Dorsolateral prefrontal cortex (tissue), 120 donors: ENCODE measurements at regions of chr4 and their contacts with region 1.

Region 1: DNA sequence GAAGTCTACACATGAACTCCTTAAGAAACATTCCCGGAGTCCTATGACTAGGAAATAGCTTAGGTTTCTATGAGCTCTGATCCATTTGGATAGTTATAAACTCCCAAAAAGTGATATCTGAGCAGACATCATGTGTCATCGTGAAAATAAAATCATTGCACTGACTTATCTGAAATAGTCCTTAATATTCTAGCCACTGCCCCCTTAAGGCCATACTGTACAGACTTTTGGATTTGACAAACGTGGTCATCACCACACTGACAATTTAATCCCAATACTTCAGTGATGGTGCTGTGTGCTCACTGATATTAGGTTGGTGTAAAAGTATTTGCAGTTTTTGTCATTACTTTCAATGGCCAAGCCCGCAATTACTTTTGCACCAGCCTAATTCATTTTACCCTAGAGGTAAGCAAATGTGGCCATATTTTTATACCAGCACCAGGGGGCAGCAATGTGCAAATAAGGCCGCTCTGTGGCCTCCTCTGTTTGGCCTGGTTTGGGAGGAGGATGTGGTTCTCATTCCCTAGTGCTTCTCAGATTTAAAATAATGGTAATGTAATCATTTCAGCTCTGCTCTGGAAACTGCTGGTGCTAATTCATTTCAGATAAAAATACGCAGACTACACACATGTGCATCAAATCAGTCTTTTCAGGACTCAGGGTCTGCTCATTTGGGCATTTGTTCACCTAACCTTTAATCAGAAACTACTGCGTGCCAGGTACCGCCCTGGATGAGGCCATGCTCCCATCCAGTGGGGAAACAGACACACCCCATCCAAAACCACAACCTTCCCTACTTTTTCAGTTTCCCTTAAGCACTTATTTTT is 196.4 kb upstream of the C1QTNF7 start:
- DNase-seq: peak in 9 of 10 donors; percentile 41 to 82 (median 67)
- H3K4me3 ChIP-seq: no peak overlapping the region
- H3K27ac ChIP-seq: peak overlapping the region in 3 of 59 donors; percentile 6 to 78 (median 21)
- H3K27me3 ChIP-seq: no peaks in the 10 kb centered on the region
- CTCF ChIP-seq: peak; percentile 61 to 92 (median 78)

Region 2: GRCh38 chr4:15149839-15150476 is 81.5 kb before region 1 on chr4:
- intact Hi-C with region 1: loop called in 1 of 2 experiments (anchors 5 kb)
- DNase-seq: peak; percentile 74 to 94 (median 90)
- H3K4me3 ChIP-seq: peak overlapping the region in 5 of 59 donors; percentile 4 to 24 (median 15)
- H3K27ac ChIP-seq: peak overlapping the region; percentile 52 to 98 (median 94)
- H3K27me3 ChIP-seq: no peaks in the 10 kb centered on the region
- CTCF ChIP-seq: peak in 32 of 56 donors; percentile 8 to 51 (median 34)

Region 3: DNA sequence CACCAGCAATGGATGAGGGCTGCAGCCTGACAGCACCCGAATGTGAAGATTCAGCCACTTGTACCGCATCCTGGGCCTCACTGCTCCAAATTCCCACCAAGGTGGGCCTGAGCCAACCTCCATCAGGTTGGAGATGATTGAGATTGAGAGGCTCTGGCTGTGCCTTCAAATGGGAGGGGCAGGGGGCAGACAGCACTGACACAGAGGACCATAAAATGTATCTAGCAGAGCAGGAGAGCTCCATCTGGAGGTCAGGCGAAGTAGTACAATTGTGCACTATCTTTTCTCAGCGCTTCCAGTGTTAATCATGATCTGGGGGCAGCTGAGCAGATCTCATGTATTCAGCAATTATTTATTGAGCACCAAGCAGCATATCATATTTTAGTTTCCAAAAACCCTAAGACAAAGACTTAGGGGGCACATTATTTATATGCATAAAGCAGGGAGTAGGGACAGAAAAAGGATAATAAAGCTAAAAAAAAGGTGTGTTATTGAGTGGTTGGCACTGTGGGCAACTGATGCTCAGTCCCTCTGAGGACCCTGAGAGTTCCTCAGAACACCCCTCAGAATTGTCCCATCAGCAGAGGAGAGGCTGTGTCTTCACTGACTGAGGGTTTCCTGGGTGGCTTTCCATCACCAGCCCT is 164.8 kb after region 1 on chr4:
- intact Hi-C with region 1: loop called (anchors 5 to 10 kb)
- DNase-seq: peak in 3 of 10 donors; percentile 28 to 35 (median 28)
- H3K4me3 ChIP-seq: no peak overlapping the region
- H3K27ac ChIP-seq: no peak overlapping the region
- H3K27me3 ChIP-seq: peaks cover 0 to 2% (median 0%) of the 10 kb centered on the region in 45 donors
- CTCF ChIP-seq: peak; percentile 35 to 75 (median 64)

Region 4: DNA sequence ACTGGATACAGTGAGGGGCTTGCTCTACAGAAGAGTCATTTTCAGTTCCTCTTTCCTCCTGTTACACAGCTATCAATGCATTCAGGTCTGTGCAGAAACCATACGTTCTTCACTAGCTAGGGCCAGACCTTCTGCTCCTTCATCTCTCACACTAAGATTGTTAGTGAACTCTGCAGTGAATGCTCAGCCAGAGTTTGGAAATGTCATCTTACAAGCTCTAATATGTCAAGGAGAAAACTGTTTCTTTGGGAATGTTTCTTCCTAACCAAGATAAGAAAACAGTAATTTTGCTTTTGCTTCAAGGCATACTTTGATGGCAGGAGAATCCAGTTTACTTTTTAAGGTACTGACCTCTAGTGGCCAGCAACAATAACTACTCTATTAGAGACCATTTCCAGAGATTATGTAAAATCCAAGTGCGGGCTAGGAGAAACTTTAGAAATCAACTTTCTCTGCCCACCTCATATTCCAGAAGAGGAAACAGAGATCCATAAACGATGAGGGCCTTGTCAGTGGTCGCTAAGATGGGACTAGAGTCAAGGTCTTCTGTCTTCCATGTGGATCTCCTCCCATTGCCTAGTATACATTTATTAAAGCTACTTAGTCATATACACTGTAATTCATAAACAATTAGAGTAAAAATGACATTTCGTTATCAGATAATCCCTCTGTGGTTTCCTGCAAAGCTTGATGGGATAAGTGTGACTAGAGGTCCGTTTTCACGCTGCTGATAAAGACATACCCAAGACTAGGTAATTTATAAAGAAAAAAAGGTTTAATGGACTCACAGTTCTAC is 226.1 kb after region 1 on chr4:
- intact Hi-C with region 1: loop called (anchors 2 to 5 kb)
- DNase-seq: no peak
- H3K4me3 ChIP-seq: peak overlapping the region in 2 of 59 donors; percentile 9 to 31
- H3K27ac ChIP-seq: peak overlapping the region in 37 of 59 donors; percentile 1 to 80 (median 43)
- H3K27me3 ChIP-seq: no peaks in the 10 kb centered on the region
- CTCF ChIP-seq: peak; percentile 66 to 93 (median 82)

Region 5: DNA sequence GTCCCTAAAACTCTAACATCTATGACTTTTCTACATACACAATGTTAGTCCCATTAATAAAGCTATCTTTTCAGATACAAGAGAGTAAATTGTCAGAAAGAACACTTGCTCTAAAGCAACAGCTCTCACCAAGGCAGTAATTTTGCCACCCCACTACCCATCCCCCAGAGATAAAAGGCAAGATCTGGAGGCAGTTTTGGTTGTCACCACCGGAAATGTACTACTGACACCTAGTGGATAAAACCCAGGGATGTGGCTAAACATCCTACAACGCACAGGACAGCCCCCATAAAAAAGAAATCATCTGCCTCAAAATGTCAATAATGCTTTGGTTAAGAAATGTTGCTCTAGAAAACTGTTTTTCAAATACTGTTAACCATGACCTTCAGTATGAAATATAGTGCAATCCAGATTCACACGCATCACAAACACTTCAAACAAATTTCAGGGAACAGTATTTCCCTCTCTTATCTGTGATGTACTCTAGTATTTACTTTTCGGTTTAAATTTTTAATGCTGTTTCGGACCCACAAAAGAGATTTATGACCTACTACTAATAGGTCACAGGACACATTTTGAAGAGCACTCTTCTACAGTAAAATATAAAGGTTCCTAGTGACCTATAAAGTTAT is 418.6 kb after region 1 on chr4:
- intact Hi-C with region 1: loop called in 1 of 2 experiments (anchors 5 kb)
- DNase-seq: peak in 3 of 10 donors; percentile 31 to 36 (median 33)
- H3K4me3 ChIP-seq: peak overlapping the region in 19 of 59 donors; percentile 0 to 34 (median 9)
- H3K27ac ChIP-seq: peak overlapping the region in 45 of 59 donors; percentile 0 to 100 (median 48)
- H3K27me3 ChIP-seq: no peaks in the 10 kb centered on the region
- CTCF ChIP-seq: peak; percentile 42 to 87 (median 72)